ENCODE measurements at regions of chr13 and their contacts with region 1.

Region 1: GRCh38 chr13:110819203-110820014 is 95.5 kb downstream of the ANKRD10 start:
- DNase-seq: peak; percentile 57 to 95
- H3K4me3 ChIP-seq: no peak overlapping the region
- CTCF ChIP-seq: peak in 2 of 3 donors; percentile 36 to 84
- POLR2A ChIP-seq: no peak

Region 2: GRCh38 chr13:110455941-110456340 is 363.5 kb before region 1 on chr13:
- intact Hi-C with region 1: loop called (anchors 10 kb)
- DNase-seq: peak; percentile 65 to 92
- H3K4me3 ChIP-seq: no peak overlapping the region
- CTCF ChIP-seq: peak in 1 of 3 donors; percentile 52
- POLR2A ChIP-seq: no peak

Region 3: DNA sequence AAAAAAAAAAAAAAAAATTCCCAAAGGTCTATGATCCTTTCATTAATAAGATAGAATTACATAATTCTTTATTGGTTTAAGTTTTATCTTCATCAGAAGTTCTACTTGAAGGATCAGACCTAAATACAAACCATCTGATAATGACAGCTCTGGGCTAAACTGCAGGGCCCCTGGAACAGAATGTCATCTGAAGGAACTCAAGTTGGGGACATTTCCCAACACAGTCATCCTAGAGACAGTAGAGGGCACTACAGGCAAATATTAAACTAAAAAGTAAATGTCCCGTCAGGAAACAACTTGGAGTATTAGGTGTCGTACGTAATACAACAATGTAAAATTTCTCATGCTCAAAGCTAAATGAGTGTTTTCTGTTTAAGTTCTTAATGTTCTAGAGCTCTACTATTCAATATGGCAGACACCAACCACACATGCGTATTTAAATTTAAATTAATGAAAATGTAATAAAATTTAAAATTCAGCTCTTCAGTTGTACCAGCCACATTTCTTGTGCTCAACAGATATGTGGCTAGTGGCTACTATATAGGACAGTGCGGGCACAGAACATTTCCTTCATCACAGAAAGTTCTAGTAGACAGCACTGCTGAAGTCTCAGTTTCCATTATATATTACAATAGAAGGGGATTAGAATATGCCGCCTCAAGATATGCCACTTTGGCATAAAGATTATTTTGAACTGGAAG is 225.8 kb before region 1 on chr13:
- intact Hi-C with region 1: loop called (anchors 10 kb)
- DNase-seq: peak in 1 of 2 donors; percentile 27
- H3K4me3 ChIP-seq: no peak overlapping the region
- CTCF ChIP-seq: peak in 1 of 3 donors; percentile 14
- POLR2A ChIP-seq: no peak

Measured in lower leg skin (tissue), 4 donors.